Heart left ventricle (tissue), 16 donors: ENCODE measurements at regions of chr19 and their contacts with region 1.

Region 1: DNA sequence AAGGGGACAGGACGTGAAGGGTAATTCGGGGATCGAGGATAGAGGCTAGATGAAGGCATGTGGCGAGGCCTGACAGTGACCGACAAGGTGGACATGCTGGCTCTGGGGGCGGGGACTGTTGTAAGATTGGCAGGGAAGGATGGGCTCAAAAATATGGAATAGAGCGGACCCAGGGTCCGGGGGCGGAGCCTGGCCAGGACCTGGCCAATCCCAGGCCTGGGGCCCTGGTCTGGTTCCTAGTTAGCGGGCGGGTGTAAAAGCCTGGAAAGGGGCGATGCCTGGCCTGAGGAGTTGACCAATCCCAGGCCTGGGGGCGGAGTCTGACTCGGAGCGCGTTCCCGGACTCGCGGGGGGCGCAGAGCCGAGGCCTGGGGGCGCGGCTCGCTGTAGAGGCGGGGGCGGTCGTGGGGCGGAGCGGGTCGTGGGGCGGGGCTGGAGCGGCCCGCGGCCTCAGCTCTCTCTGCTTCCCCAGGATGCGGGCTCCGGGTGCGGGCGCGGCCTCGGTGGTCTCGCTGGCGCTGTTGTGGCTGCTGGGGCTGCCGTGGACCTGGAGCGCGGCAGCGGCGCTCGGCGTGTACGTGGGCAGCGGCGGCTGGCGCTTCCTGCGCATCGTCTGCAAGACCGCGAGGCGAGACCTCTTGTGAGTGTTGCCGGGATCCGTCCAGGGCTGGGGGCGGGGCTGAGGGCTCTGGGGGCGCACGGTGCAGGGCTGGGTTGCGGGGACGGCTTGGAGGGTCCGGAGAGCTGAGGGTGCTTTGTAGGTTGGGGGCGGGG is at the start of gene SLC27A1:
- DNase-seq: peak; percentile 98 to 100 (median 99)
- ATAC-seq: peak; percentile 84 to 93 (median 90)
- H3K4me3 ChIP-seq: peak within 1 kb of the TSS; percentile 62 to 97 (median 86)
- H3K27ac ChIP-seq: peak within 1 kb of the TSS; percentile 78 to 98 (median 95)
- H3K4me1 ChIP-seq: peaks cover 0 to 56% (median 17%) of the 10 kb centered on the region in 12 donors
- H3K27me3 ChIP-seq: no peaks in the 10 kb centered on the region
- CTCF ChIP-seq: no peak
- POLR2A ChIP-seq: peak in 1 of 2 donors; percentile 33
- total RNA-seq, gene SLC27A1: 32.6 to 70.3 (median 52.7) TPM

Region 2: GRCh38 chr19:17346109-17346671 is 124.1 kb before region 1 on chr19:
- intact Hi-C with region 1: loop called in 6 of 10 experiments (anchors 2 to 10 kb)
- DNase-seq: peak; percentile 70 to 88 (median 75)
- ATAC-seq: peak; percentile 51 to 79 (median 72)
- H3K4me3 ChIP-seq: no peak overlapping the region
- H3K27ac ChIP-seq: peak overlapping the region in 10 of 12 donors; percentile 23 to 84 (median 68)
- H3K4me1 ChIP-seq: peaks cover 0 to 45% (median 30%) of the 10 kb centered on the region in 12 donors
- H3K27me3 ChIP-seq: no peaks in the 10 kb centered on the region
- CTCF ChIP-seq: peak; percentile 88 to 97 (median 96)
- POLR2A ChIP-seq: no peak

Region 3: DNA sequence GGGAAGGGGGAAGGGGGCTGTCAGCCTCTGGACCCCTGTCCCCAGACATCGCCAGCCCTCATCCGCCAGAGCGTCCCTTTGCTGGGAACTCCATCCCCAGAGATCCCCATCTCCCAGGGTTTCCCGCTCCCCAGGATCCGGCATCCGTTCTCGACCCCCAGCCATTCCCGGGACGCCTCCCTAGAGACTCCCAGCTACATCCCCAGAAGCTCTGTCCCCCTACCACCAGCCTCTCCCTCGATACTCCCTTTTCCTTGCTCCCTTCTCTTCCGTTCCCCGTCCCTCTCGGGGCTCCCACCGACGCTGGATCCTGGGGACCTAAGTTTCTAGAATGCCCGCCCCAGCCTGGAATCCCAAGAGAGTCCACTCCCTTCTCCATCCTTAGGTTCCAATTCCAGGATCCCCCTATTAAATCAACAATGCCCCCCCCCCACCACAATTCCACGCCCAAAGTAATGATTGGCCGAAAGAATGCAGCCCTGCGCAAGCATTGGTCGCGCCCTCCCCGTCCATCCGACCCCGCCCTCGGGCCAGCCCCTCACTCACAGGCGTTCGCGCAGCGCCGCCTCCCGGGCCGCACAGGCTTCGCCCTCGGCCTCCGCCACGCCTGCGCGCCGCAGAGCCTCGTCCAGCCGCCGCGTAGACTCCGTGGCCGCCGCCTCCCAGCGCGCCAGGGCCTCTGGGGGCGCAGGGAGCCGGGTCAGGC is 79.4 kb before region 1 on chr19:
- intact Hi-C with region 1: loop called in 8 of 10 experiments (anchors 1 to 10 kb)
- DNase-seq: peak; percentile 93 to 96 (median 94)
- ATAC-seq: peak; percentile 91 to 99 (median 98)
- H3K4me3 ChIP-seq: peak overlapping the region; percentile 8 to 70 (median 50)
- H3K27ac ChIP-seq: peak overlapping the region in 4 of 12 donors; percentile 3 to 28 (median 7)
- H3K4me1 ChIP-seq: peaks cover 2 to 44% (median 17%) of the 10 kb centered on the region in 12 donors
- H3K27me3 ChIP-seq: peaks cover 0 to 16% (median 7%) of the 10 kb centered on the region in 9 donors
- CTCF ChIP-seq: peak; percentile 45 to 88 (median 79)
- POLR2A ChIP-seq: peak in 1 of 2 donors; percentile 36

Region 4: DNA sequence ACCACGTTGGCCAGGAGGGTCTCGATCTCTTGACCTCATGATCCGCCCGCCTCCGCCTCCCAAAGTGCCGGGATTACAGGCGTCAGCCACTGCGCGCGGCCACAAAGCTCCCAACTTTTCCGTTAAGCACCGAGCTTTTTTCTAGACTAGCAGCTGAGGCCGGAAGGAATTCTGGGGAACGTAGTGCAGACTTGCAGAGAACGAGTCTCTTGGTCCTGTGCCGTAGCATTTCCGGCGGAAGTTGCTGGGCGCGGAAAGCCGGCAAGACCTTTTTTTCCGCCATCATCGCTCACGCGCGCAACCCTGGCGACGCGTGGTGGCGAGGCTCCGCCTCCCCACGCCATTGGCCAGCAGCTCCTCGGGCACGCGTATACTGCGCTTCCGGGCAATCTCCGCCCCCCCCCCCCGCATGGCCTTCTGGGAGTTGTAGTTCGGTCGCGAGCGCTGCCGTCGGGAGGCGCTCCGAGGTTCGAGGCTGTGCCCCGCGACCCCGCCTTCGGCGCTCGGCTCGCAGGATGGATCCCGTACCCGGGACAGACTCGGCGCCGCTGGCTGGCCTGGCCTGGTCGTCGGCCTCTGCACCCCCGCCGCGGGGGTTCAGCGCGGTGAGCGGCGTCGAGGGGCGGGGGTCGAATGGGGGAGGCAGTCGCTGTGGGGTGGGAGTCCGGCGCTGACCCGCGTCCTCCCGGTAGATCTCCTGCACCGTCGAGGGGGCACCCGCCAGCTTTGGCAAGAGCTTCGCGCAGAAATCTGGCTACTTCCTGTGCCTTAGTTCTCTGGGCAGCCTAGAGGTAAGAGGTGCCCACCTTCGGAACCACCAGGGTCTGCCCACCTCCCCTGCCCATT is 50.4 kb before region 1 on chr19 and contains the start of gene MVB12A:
- intact Hi-C with region 1: loop called in 1 of 10 experiments (anchors 1 kb)
- DNase-seq: peak; percentile 98 to 99 (median 98)
- ATAC-seq: peak; percentile 95 to 99 (median 98)
- H3K4me3 ChIP-seq: peak within 1 kb of the TSS; percentile 46 to 98 (median 88)
- H3K27ac ChIP-seq: peak within 1 kb of the TSS in 11 of 12 donors; percentile 61 to 90 (median 83)
- H3K4me1 ChIP-seq: peaks cover 0 to 20% (median 9%) of the 10 kb centered on the region in 12 donors
- H3K27me3 ChIP-seq: no peaks in the 10 kb centered on the region
- CTCF ChIP-seq: no peak
- POLR2A ChIP-seq: peak in 1 of 2 donors; percentile 60
- total RNA-seq, gene MVB12A: 11.8 to 41.5 (median 18.5) TPM

Region 5: GRCh38 chr19:17448131-17448967 is 21.9 kb before region 1 on chr19 and contains the start of gene TMEM221:
- intact Hi-C with region 1: loop called in 1 of 10 experiments (anchors 2 kb)
- DNase-seq: peak; percentile 35 to 77 (median 53)
- ATAC-seq: peak in 3 of 4 donors; percentile 66 to 80 (median 66)
- H3K4me3 ChIP-seq: peak within 1 kb of the TSS; percentile 22 to 61 (median 53)
- H3K27ac ChIP-seq: peak within 1 kb of the TSS in 1 of 12 donors; percentile 25
- H3K4me1 ChIP-seq: peaks cover 0 to 13% (median 7%) of the 10 kb centered on the region in 12 donors
- H3K27me3 ChIP-seq: peaks cover 0 to 14% (median 0%) of the 10 kb centered on the region in 9 donors
- CTCF ChIP-seq: peak; percentile 29 to 74 (median 58)
- POLR2A ChIP-seq: no peak
- total RNA-seq, gene TMEM221: 0.52 TPM in 1 of 9 donors, not detected in the others

Region 6: DNA sequence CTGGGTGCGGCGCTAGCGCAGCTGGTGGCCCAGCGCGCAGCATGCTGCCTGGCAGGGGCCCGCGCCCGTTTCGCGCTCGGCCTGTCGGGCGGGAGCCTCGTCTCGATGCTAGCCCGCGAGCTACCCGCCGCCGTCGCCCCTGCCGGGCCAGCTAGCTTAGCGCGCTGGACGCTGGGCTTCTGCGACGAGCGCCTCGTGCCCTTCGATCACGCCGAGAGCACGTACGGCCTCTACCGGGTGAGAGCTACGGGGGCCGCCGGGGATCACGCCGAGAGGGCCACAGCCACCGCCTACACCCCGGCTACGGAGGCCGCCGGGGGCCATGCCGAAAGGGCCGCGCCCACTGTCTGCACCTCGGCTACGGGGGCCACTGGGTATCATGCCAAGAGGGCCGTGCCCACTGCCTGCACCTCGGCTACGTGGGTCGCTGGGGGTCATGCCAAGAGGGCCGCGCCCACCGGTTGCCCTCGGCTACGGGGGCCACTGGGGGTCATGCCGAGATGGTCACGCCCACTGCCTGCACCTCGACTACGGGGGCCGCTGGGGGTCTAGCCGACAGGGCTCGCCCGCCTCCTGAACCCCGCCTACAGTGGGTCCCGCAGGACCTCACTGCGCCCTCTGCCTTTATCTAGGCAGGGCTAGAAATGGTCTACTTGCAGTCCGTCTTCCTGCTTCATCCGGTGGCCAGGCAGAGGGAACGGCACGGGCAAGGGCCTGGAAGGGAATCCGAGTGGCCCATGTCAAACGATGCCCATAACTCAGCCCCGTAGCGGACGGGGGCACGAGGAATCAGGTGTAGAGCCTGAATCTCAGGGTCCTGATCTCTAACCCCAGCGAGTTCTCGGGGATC is 41.7 kb after region 1 on chr19:
- intact Hi-C with region 1: loop called in 3 of 10 experiments (anchors 1 to 5 kb)
- DNase-seq: peak; percentile 92 to 95 (median 94)
- ATAC-seq: peak; percentile 75 to 85 (median 82)
- H3K4me3 ChIP-seq: peak overlapping the region; percentile 69 to 100 (median 88)
- H3K27ac ChIP-seq: peak overlapping the region; percentile 98 to 100 (median 99)
- H3K4me1 ChIP-seq: peaks cover 0 to 42% (median 21%) of the 10 kb centered on the region in 12 donors
- H3K27me3 ChIP-seq: no peaks in the 10 kb centered on the region
- CTCF ChIP-seq: peak in 9 of 12 donors; percentile 6 to 51 (median 17)
- POLR2A ChIP-seq: peak in 1 of 2 donors; percentile 31

Region 7: GRCh38 chr19:17555480-17555928 is 85.2 kb after region 1 on chr19 and contains the start of gene COLGALT1:
- intact Hi-C with region 1: loop called in 1 of 10 experiments (anchors 10 kb)
- DNase-seq: peak; percentile 99
- ATAC-seq: peak; percentile 96 to 98 (median 96)
- H3K4me3 ChIP-seq: peak within 1 kb of the TSS; percentile 71 to 98 (median 88)
- H3K27ac ChIP-seq: peak within 1 kb of the TSS; percentile 68 to 97 (median 86)
- H3K4me1 ChIP-seq: peaks cover 3 to 70% (median 40%) of the 10 kb centered on the region in 12 donors
- H3K27me3 ChIP-seq: no peaks in the 10 kb centered on the region
- CTCF ChIP-seq: no peak
- POLR2A ChIP-seq: peak in 1 of 2 donors; percentile 50
- total RNA-seq, gene COLGALT1: 23.7 to 117 (median 32.6) TPM

Region 8: DNA sequence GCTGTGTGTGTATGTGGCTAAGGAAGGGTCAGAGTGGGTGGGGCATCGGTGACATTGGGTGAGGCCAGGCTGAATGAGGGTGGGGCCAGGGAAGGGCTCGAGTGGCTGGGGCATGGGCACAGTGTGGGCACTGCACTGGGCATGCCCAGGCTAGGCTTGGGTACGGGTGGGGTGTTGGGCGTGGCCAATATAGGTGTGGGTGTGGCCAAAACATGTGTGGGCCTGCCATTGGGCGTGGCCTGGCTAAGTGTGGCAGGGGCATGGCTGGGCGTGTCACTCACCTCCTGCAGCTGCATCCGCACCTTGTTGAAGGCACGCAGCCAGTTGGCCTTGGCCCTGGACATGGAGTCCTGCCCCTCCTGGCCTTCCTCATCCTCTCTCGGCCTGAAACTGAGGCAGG is 184.7 kb after region 1 on chr19:
- intact Hi-C with region 1: no loop called
- DNase-seq: no peak
- ATAC-seq: peak in 2 of 4 donors; percentile 14 to 18
- H3K4me3 ChIP-seq: no peak overlapping the region
- H3K27ac ChIP-seq: no peak overlapping the region
- H3K4me1 ChIP-seq: peaks cover 0 to 3% (median 0%) of the 10 kb centered on the region in 12 donors
- H3K27me3 ChIP-seq: no peaks in the 10 kb centered on the region
- CTCF ChIP-seq: no peak
- POLR2A ChIP-seq: no peak